ENCODE measurements at regions of chr11 and their contacts with region 1.

Region 1: DNA sequence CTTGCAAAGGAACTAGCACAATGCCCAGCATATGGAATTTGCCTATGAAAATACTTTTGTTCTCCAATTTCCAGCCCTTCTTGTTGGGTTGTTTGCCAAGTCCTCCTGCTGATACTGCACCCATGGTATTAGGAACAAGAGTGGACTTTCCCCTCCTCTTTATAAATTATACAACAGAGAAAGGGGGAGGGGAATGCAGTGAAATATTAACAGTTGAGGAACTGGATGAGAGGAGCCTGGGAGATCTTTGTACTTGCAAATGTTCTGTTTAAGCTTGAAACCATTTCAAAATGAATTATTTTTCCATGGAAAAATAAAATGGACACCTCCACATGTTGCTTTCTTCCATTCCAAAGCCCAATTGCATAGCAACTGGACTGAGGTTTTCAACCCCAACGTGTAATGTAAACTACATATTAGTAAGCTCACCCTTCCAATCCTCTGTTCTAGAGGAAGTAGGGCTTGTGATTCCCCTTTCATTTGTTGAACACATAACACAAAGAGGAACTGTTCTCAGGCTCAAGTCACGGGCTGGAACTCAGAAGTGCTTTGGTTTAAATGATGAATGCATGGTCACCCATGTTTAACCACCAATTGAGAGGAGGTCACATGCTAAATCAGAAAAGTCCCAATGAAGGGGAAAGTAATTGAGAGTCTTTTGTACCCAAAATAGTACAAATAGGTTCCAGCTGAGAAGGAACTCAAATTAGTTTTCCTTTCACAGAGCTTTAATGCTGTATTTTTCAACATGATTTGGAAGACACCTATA is 66.2 kb upstream of the ZC3H12C start:
- DNase-seq: peak; percentile 99
- ATAC-seq: peak; percentile 87
- H3K4me3 ChIP-seq: peak overlapping the region; percentile 23; the same call in 1 of the 2 replicates
- H3K27ac ChIP-seq: peak overlapping the region; percentile 91
- H3K4me1 ChIP-seq: peaks cover 33% of the 10 kb centered on the region
- H3K27me3 ChIP-seq: no peaks in the 10 kb centered on the region
- CTCF ChIP-seq: no peak
- EP300 ChIP-seq: peak; percentile 99
- POLR2A ChIP-seq: no peak
- RAD21 ChIP-seq: peak; percentile 29; the same call in 1 of the 2 replicates

Region 2: GRCh38 chr11:109828387-109828786 is 198.7 kb before region 1 on chr11:
- CTCF ChIA-PET with region 1: no interaction called
- POLR2A ChIA-PET with region 1: no interaction called
- RAD21 ChIA-PET with region 1: no interaction called
- SMC1A ChIA-PET with region 1: no interaction called
- in situ Hi-C with region 1: no loop called
- intact Hi-C with region 1: no loop called
- DNase-seq: no peak
- ATAC-seq: no peak
- H3K4me3 ChIP-seq: no peak overlapping the region
- H3K27ac ChIP-seq: no peak overlapping the region
- H3K4me1 ChIP-seq: no peaks in the 10 kb centered on the region
- H3K27me3 ChIP-seq: peaks cover 0 to 1% of the 10 kb centered on the region in 2 experiments; a peak in 1 of 4 replicates
- CTCF ChIP-seq: no peak
- EP300 ChIP-seq: no peak
- POLR2A ChIP-seq: no peak
- RAD21 ChIP-seq: no peak

Region 3: DNA sequence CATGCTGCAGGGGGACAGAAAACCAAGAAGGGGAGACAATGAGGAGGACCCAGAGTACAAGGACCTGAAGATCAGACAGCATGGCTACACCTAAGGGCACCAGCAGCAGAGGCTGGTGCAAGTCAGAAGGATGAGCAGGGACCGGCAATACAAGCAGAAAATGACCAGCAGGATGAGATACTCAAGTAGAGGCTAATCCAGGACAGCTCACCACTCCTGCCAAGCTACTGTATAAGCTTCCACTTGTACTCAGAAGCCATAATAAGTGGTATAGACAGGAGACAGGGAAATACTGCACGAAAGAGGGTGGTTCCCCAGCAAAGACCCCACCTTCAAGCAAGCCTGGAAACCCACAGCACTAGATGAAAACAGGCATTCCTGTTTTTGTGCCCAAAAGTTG is 72.5 kb before region 1 on chr11:
- CTCF ChIA-PET with region 1: interaction called, 5 read pairs
- POLR2A ChIA-PET with region 1: interaction called, 34 read pairs
- RAD21 ChIA-PET with region 1: interaction called, 108 read pairs
- SMC1A ChIA-PET with region 1: interaction called, 57 read pairs
- in situ Hi-C with region 1: loop called (anchors 5 kb)
- intact Hi-C with region 1: loop called (anchors 2 kb)
- DNase-seq: no peak
- ATAC-seq: no peak
- H3K4me3 ChIP-seq: no peak overlapping the region
- H3K27ac ChIP-seq: no peak overlapping the region
- H3K4me1 ChIP-seq: peaks cover 34% of the 10 kb centered on the region
- H3K27me3 ChIP-seq: no peaks in the 10 kb centered on the region
- CTCF ChIP-seq: no peak
- EP300 ChIP-seq: no peak
- POLR2A ChIP-seq: no peak
- RAD21 ChIP-seq: no peak

Region 4: GRCh38 chr11:109984634-109985289 is 42.3 kb before region 1 on chr11:
- CTCF ChIA-PET with region 1: interaction called, 4 read pairs
- POLR2A ChIA-PET with region 1: interaction called, 12 read pairs
- RAD21 ChIA-PET with region 1: interaction called, 18 read pairs
- SMC1A ChIA-PET with region 1: interaction called, 16 read pairs
- in situ Hi-C with region 1: no loop called
- intact Hi-C with region 1: loop called (anchors 5 kb)
- DNase-seq: peak; percentile 67
- ATAC-seq: peak; percentile 94
- H3K4me3 ChIP-seq: peak overlapping the region; percentile 30
- H3K27ac ChIP-seq: peak overlapping the region; percentile 89
- H3K4me1 ChIP-seq: peaks cover 19% of the 10 kb centered on the region
- H3K27me3 ChIP-seq: no peaks in the 10 kb centered on the region; a peak in 1 of 4 replicates
- CTCF ChIP-seq: no peak
- EP300 ChIP-seq: peak; percentile 94 to 95
- POLR2A ChIP-seq: no peak
- RAD21 ChIP-seq: no peak

Region 5: GRCh38 chr11:110038201-110038600 is 11.2 kb after region 1 on chr11:
- CTCF ChIA-PET with region 1: interaction called, 4 read pairs
- POLR2A ChIA-PET with region 1: no interaction called
- RAD21 ChIA-PET with region 1: interaction called, 3 read pairs
- SMC1A ChIA-PET with region 1: interaction called, 10 read pairs
- in situ Hi-C with region 1: no loop called
- intact Hi-C with region 1: no loop called
- DNase-seq: no peak
- ATAC-seq: no peak
- H3K4me3 ChIP-seq: no peak overlapping the region
- H3K27ac ChIP-seq: no peak overlapping the region
- H3K4me1 ChIP-seq: no peaks in the 10 kb centered on the region
- H3K27me3 ChIP-seq: no peaks in the 10 kb centered on the region
- CTCF ChIP-seq: no peak
- EP300 ChIP-seq: no peak
- POLR2A ChIP-seq: no peak
- RAD21 ChIP-seq: no peak

Region 6: DNA sequence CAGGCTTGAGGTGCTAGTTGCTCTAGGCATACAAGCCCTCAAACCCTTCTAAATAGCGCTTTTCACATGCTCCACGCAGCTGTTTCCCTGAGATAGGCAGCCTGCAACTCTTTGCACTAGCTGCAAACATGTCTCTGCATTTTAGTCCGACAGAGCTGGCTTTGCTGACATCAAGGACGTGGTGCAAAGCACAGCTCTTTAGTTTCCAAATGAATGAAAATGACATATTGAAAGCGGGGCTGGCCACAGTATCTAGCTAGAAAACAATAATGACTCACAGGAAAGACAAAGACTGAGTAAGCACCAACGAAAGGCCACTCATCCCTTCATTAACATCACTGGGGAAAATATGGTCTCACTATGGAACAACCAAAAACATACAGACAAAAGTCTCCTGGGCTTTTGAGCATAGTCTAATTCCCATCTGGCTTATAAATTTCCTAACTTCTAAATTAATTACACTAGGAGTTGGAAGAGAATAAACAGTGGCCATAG is 50.8 kb after region 1 on chr11:
- CTCF ChIA-PET with region 1: interaction called, 18 read pairs
- POLR2A ChIA-PET with region 1: interaction called, 36 read pairs
- RAD21 ChIA-PET with region 1: interaction called, 89 read pairs
- SMC1A ChIA-PET with region 1: interaction called, 107 read pairs
- in situ Hi-C with region 1: no loop called
- intact Hi-C with region 1: loop called (anchors 1 kb)
- DNase-seq: peak; percentile 86
- ATAC-seq: peak; percentile 88
- H3K4me3 ChIP-seq: no peak overlapping the region
- H3K27ac ChIP-seq: peak overlapping the region; percentile 51
- H3K4me1 ChIP-seq: peaks cover 16% of the 10 kb centered on the region
- H3K27me3 ChIP-seq: no peaks in the 10 kb centered on the region
- CTCF ChIP-seq: no peak
- EP300 ChIP-seq: peak; percentile 84 to 91
- POLR2A ChIP-seq: no peak
- RAD21 ChIP-seq: no peak; the same call in 1 of the 2 replicates

Region 7: DNA sequence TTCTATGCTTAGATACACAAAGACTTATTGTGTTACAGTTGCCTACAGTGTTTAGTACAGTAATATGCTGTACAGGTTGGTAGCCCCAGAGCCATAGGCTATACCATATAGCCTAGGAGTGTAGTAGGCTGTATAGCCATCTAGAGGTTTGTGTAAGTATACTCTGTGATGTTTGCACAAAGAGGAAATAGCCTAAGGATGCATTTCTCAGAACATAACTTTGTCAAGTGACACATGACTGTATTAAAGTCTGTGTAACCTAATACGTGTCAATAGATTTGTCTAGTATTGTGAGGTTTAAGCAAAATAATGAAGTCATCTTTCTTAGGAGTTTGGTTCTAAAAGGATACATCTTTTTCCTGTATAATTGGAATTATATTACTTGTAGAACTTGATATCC is 71.6 kb after region 1 on chr11:
- CTCF ChIA-PET with region 1: interaction called, 5 read pairs
- POLR2A ChIA-PET with region 1: interaction called, 16 read pairs
- RAD21 ChIA-PET with region 1: interaction called, 50 read pairs
- SMC1A ChIA-PET with region 1: interaction called, 214 read pairs
- in situ Hi-C with region 1: no loop called
- intact Hi-C with region 1: loop called (anchors 1 kb)
- DNase-seq: no peak
- ATAC-seq: peak; percentile 78
- H3K4me3 ChIP-seq: no peak overlapping the region
- H3K27ac ChIP-seq: no peak overlapping the region
- H3K4me1 ChIP-seq: peaks cover 11% of the 10 kb centered on the region; the same call in 1 of the 2 replicates
- H3K27me3 ChIP-seq: no peaks in the 10 kb centered on the region
- CTCF ChIP-seq: peak; percentile 23 to 41 (median 25); a peak in 3 of 6 replicates
- EP300 ChIP-seq: peak in 1 of 2 experiments; percentile 30; a peak in 1 of 4 replicates
- POLR2A ChIP-seq: no peak
- RAD21 ChIP-seq: peak; percentile 57

Measured in GM12878 (cell line).